Calu3 (cell line): ENCODE measurements at regions of chr20 and their contacts with region 1.

Region 1: DNA sequence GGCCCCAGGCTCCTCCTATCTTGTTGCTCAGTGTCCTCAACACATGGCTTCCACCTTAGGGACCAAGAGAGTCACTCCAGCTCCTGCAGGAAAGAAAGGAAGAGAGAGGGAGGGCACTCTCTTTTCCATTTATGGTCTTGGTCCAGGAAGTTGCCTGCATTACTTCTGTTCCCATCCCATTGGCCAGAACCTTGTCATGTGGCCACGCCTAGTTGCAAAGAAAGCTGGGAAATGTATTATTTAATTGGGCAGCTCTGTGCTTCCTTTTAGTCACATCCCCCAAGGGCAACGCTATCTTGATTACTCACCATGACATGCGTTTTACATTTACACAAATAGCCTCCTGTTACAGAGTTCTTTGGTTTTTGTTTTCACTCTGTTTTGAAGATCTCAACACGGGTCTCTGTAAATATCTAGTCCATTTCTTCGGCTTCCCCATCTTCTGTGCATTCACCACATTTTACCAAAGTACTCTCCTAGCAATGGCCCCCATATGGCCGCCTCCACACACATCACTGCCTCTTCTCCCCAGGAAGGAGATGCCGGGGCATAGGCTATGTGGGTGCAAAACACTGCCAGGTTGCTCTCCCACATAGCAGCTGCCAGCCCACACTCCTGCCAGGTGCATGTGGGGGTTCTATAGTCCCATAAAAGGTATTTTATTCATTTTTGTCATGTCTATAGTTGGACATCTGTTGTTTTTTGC is 35.7 kb upstream of the ZMYND8 start:
- DNase-seq: peak; percentile 87
- H3K4me3 Mint-ChIP-seq: peak overlapping the region; percentile 34
- H3K27ac Mint-ChIP-seq: peak overlapping the region; percentile 100
- H3K4me1 Mint-ChIP-seq: peaks cover 34% of the 10 kb centered on the region
- H3K27me3 Mint-ChIP-seq: no peaks in the 10 kb centered on the region
- CTCF ChIP-seq: no peak

Region 2: DNA sequence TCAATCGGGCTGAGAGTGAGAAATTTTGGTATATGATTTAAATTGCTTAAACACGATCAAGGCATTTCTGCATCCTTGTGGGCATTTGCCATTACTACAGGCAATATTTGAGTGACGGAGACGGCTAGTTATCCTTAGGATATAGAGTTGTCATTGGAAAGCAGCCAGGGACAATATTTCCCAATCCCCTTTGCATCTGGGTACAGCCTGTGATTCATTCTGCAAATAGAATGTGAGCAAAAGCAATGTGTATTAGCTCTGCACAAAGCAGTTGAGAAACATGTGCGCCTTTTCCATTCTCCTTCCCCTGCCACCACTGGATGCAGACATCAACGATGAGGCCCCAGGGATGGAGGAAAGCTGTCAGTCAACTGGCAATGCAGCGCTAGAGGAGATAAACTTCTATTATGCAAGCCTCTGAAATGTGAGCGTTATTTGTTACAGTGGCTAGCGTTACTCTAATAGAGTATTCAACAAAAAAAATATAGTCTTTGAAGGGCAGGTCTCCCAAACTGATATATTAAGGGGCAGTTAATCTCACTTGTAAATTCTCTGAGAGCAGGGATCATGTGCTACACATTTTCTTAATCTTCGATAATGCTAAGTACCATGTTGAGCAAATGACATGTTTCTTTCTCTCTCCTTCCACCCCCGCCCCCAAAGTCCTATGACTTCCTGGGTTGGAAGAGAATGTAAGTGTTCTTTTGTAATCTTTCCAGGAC is 72.4 kb after region 1 on chr20:
- CTCF ChIA-PET with region 1: interaction called, 7 read pairs
- intact Hi-C with region 1: loop called (anchors 5 kb)
- DNase-seq: peak; percentile 93
- H3K4me3 Mint-ChIP-seq: peak overlapping the region; percentile 5
- H3K27ac Mint-ChIP-seq: peak overlapping the region; percentile 33
- H3K4me1 Mint-ChIP-seq: peaks cover 14% of the 10 kb centered on the region
- H3K27me3 Mint-ChIP-seq: no peaks in the 10 kb centered on the region
- CTCF ChIP-seq: peak; percentile 8